ENCODE measurements at regions of chr17 and their contacts with region 1.

Region 1: GRCh38 chr17:2853111-2853721 is 57.0 kb downstream of the RAP1GAP2 start:
- DNase-seq: peak; percentile 79
- ATAC-seq: peak; percentile 62

Region 2: GRCh38 chr17:2613089-2613808 is 240.0 kb before region 1 on chr17:
- intact Hi-C with region 1: no loop called
- DNase-seq: no peak
- ATAC-seq: no peak

Region 3: GRCh38 chr17:2899906-2900305 is 46.7 kb after region 1 on chr17:
- intact Hi-C with region 1: loop called (anchors 2 kb)
- DNase-seq: no peak
- ATAC-seq: no peak

Region 4: DNA sequence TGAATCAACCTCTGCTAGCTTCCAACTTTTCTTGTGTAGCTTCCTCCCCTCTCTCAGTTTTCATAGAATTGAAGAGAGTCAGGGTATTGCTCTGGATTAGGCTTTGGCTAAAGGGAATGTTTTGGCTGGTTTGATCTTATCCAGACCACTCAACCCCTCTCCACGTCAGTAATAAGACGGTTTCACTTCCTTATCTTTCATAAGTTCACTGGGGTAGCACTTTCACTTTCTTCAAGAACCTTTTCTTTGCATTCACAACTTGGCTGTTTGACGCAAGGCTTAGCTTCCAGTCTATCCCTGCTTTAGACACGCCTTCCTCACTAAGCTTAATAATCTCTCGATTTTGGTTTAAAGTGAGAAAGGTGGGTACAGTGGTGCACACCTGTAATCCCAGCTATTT is 314.4 kb after region 1 on chr17:
- intact Hi-C with region 1: no loop called
- DNase-seq: no peak
- ATAC-seq: no peak